ENCODE measurements at regions of chr10 and their contacts with region 1.

Region 1: GRCh38 chr10:14742815-14743214 is 31.9 kb downstream of the FAM107B start:
- DNase-seq: peak; percentile 18
- H3K4me3 Mint-ChIP-seq: no peak overlapping the region
- H3K27ac Mint-ChIP-seq: peak overlapping the region; percentile 64
- H3K4me1 Mint-ChIP-seq: peaks cover 31% of the 10 kb centered on the region
- H3K27me3 Mint-ChIP-seq: no peaks in the 10 kb centered on the region

Region 2: DNA sequence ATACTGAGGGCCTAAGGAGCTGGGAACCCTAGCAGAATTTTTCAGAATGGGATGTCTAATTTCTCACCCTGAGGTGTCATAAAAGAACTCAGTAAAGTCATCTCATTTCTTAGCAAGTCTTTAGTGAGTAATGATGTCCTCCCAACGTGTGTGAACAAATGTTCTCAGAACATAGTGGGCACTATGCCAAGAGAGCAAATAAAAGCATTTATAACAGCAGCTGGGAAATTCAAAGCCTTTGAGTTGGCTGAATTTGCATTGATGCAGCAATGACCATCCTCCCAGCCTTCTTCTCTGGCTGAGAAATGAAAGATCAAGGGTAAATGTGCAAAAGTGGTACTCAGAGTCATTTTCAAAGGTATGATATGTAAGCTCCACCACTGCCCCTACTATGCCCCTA is 77.5 kb before region 1 on chr10:
- CTCF ChIA-PET with region 1: no interaction called
- intact Hi-C with region 1: loop called (anchors 2 kb)
- DNase-seq: peak; percentile 65
- H3K4me3 Mint-ChIP-seq: no peak overlapping the region
- H3K27ac Mint-ChIP-seq: peak overlapping the region; percentile 78
- H3K4me1 Mint-ChIP-seq: peaks cover 53% of the 10 kb centered on the region
- H3K27me3 Mint-ChIP-seq: no peaks in the 10 kb centered on the region

Region 3: DNA sequence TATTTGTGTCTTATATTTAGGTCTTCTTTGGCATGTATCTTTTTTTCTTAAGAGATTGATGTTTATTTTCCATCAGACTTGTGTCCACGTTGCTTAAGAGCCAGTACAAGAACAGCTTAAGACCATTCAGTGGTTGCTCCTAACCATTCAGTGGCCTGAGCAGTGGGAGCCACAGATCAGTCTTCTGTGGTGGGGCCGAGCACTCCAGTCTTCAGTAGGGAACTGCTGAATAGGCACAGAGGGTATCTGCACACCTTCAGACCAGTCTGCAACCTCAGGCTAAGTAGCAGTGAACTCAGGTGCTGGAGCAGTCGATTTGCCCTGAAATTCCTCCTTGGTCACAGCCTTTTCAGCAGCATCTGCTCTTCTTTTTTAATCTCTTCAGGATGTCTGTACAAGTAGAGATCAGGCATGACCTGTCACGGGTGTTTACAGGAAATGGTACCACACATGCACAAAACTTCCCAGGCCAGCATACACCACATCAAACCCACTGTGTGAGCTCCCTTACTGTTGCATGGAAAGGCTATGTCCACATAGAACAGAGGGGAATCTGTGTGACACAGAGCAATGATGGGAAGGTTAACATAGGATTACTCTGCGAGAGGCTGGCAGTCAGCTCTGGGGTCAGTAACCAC is 19.6 kb before region 1 on chr10:
- CTCF ChIA-PET with region 1: no interaction called
- intact Hi-C with region 1: loop called (anchors 2 kb)
- DNase-seq: peak; percentile 67
- H3K4me3 Mint-ChIP-seq: no peak overlapping the region
- H3K27ac Mint-ChIP-seq: no peak overlapping the region
- H3K4me1 Mint-ChIP-seq: peaks cover 35% of the 10 kb centered on the region
- H3K27me3 Mint-ChIP-seq: no peaks in the 10 kb centered on the region

Region 4: DNA sequence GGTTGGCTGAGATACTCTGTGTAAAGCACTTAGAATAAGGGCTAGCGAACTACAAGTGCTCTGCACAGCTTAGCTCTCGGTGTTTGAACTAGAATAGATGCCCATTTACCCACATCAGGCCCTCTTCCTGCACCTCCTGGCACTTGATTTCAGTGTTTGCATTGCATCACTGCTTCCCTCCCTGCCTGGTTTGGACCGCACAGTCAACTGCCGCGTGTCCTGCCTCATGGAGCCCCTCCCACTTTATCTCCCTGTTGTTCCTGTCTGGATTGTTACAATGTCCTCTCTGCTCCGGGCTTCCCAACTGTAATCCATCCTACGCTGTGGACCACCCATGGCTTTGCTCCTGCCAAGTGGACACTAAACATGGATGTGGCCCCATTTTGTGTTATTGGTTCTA is 29.6 kb after region 1 on chr10:
- CTCF ChIA-PET with region 1: no interaction called
- intact Hi-C with region 1: no loop called
- DNase-seq: no peak
- H3K4me3 Mint-ChIP-seq: no peak overlapping the region
- H3K27ac Mint-ChIP-seq: no peak overlapping the region
- H3K4me1 Mint-ChIP-seq: no peaks in the 10 kb centered on the region
- H3K27me3 Mint-ChIP-seq: no peaks in the 10 kb centered on the region

Measured in activated naive CD4-positive, alpha-beta T cell treated with anti-CD3 and anti-CD28 coated beads for 36 hours (primary cell).